ENCODE measurements at regions of chr4 and their contacts with region 1.

Region 1: DNA sequence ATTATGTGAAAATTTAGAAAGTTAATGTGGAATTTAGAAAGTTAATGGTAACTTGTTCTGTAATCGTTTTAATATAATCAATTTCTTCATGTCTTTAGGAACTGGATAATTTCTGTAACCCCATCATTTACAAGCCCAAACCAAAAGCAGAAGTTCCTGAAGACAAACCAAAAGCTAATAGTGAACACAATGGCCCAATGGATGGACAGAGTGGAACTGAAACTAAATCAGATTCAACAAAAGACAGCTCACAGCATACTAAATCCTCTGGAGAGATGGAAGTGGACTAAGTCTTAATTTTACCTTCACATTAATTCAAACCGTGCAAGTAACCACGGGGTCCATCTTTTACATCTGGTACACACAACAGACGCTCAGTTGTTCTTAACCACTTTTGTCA is 48.1 kb upstream of the PLK4 start:
- DNase-seq: no peak

Region 2: DNA sequence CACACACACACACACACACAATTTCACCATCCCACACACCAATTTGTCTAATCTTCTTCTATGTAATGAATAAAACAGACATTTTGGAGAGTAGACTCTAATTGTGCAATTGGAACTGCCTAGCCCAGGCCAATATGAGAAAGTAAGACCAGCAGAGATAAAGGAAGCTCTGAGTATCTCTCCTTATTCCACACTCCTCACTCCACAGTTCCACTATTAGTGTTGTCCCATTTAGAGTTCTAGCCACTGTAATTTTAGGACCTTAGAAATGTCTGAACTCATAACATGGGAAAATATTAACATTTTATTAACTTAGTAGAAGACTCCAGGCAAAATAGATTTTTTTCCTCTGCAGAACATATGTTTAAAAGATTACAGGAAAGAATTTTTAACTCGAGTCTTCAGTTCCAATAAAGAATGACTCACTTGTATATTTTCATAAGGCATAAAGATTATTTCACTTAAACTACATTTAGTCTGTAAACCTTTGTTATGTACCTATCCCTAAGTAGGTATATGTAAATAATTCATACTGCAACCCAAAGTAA is 497.4 kb before region 1 on chr4:
- intact Hi-C with region 1: loop called in 1 of 2 experiments (anchors 5 kb)
- DNase-seq: no peak

Region 3: DNA sequence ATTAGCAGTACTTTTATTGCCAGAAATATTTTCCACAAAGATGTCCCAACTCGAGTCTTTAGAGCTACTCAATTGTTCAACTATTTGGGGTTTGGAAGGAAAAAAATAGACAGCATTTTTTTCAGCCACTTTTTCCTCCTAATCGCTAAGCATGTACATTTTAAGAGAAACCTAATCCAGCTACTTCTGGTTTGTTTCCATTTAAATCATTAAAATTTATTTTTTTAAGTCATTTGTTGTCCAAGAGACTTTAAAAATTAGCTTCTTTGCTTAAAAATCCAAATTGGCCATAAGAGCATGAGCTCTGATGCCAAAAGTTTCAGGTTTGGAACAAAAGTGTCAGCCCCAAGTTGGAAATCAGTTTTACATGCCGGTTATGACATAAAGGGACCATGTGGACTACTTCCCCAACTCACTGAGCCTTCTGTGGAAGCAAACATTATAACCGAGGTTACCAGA is 386.1 kb before region 1 on chr4:
- intact Hi-C with region 1: no loop called
- DNase-seq: no peak

Region 4: DNA sequence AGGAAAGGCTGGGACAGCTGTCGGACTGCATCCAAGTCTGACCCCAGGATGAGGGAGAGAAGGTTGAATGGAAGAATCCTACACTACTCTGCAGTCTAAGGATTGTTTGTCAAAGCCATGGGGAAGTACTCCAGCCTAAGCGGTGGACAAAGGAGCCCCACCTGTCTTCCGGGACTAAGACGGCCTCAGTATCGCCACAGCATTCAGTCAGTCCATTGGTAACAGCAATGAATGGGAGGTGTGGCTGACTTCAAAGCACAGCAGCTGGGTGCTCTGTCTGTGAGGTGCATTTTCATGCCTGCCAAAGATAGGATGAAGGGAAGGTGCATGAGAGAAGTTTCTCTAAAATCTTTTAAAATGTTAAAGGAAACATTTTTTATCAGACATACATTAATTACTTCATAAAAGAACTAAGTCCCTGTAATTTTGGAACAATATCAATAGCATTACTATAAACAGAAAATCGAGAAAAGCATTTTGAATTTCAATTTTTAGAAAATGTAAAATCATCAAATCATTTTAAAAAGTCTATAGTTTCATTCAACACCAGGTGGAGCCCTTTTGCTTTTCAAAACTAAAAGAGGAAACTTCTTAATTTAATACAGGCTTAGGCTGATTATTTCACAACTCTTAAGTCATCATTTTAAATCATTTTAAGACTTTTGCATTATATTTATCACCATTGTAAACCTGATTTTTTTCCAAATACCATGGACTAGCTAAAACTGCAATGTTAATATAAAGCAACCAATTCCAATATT is 227.5 kb before region 1 on chr4:
- intact Hi-C with region 1: no loop called
- DNase-seq: no peak